ENCODE measurements at regions of chr20 and their contacts with region 1.

Region 1: GRCh38 chr20:63309261-63310071 is 16.5 kb downstream of the COL20A1 start:
- DNase-seq: peak in 37 of 42 donors; percentile 21 to 78 (median 44)

Region 2: DNA sequence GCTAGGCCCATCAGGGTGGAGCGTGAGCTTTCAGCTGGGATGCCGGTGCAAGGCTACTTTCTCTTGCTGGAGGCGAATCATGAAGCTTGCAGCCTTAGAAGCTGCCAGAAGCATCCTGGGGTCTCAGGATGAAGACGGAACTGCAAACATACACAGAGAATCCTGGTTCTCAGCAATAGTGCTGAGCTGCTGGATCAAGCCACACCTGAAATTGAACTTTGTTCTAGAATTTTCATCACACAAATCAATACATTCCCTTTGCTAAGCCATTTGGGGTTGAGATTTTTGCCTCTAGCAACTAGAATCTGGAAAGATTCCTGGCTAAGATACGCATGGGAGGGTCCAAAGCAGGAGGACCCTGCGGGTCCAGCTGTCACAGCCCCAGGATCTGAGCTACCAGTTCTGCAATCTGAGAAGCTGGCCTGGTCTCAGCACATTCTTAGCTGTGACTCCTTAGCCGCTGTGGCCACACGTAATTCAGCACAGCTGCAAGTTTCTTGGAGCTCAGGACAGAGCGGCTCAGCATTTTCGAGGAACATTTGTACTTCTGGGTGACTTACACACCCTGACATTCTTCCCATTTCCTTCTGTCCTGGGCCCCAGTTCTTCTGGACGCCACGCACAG is 43.5 kb before region 1 on chr20:
- intact Hi-C with region 1: no loop called
- DNase-seq: no peak

Region 3: GRCh38 chr20:63381807-63382322 is 72.4 kb after region 1 on chr20:
- intact Hi-C with region 1: loop called (anchors 5 kb)
- DNase-seq: peak in 24 of 42 donors; percentile 19 to 72 (median 48)